ENCODE measurements at regions of chr6 and their contacts with region 1.

Region 1: DNA sequence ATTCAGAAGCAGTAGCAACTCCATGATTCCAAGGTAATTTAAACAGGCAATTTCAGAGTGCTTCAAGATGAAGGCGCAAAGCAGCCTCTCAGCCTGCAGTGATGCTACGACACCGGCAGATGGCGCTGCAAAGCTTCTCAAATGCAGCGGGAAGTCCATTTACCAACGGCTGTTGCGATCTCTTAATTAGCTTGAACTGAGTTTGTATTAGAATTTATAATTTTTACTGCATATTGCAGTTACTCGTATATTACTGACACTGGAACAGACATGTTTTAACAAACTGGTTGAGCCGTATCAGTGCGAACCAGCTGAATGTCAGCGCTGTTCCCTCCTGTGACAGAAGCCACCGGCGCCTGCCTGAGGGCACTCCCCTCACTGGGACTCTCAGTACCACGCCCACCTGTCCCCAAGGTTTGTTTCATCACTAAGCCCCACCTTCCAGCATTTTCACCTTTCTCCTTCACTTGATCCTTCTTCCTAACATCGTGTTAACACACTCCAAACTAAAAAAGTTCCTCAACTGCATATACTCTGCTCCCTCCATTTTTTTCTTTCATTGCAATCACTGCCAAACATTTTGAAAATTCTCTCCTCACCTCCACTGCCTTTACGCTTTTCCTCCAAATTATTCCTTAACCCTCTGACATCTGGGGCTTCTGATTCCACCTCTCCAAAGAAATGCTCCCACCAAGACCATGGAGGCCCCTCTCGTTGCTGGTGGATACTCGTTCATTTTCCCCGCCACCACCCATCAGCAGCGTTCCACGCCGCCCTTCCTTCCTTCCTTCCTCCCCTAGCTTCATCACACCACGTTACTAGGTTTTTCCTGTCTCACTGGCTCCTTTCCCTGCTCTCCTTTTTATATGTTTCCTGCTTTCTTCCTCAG is 14.5 kb downstream of the GNL1 start:
- DNase-seq: peak; percentile 88
- ATAC-seq: peak; percentile 82
- H3K4me3 Mint-ChIP-seq: peak overlapping the region; percentile 65
- H3K27ac Mint-ChIP-seq: peak overlapping the region; percentile 73
- H3K4me1 Mint-ChIP-seq: peaks cover 34% of the 10 kb centered on the region
- H3K27me3 Mint-ChIP-seq: peaks cover 5% of the 10 kb centered on the region

Region 2: GRCh38 chr6:30357678-30358540 is 183.8 kb before region 1 on chr6:
- CTCF ChIA-PET with region 1: no interaction called
- POLR2A ChIA-PET with region 1: no interaction called
- DNase-seq: peak; percentile 64
- ATAC-seq: peak; percentile 84
- H3K4me3 Mint-ChIP-seq: peak overlapping the region; percentile 71
- H3K27ac Mint-ChIP-seq: no peak overlapping the region
- H3K4me1 Mint-ChIP-seq: peaks cover 7% of the 10 kb centered on the region
- H3K27me3 Mint-ChIP-seq: peaks cover 63% of the 10 kb centered on the region

Region 3: GRCh38 chr6:30453508-30454116 is 88.1 kb before region 1 on chr6:
- CTCF ChIA-PET with region 1: interaction called, 76 read pairs
- POLR2A ChIA-PET with region 1: interaction called, 4 read pairs
- DNase-seq: peak; percentile 89
- ATAC-seq: peak; percentile 86
- H3K4me3 Mint-ChIP-seq: no peak overlapping the region
- H3K27ac Mint-ChIP-seq: no peak overlapping the region
- H3K4me1 Mint-ChIP-seq: peaks cover 29% of the 10 kb centered on the region
- H3K27me3 Mint-ChIP-seq: peaks cover 84% of the 10 kb centered on the region

Region 4: GRCh38 chr6:30489081-30490025 is 52.4 kb before region 1 on chr6 and contains the start of gene HLA-E:
- CTCF ChIA-PET with region 1: interaction called, 464 read pairs
- POLR2A ChIA-PET with region 1: interaction called, 35 read pairs
- DNase-seq: peak; percentile 96
- ATAC-seq: peak; percentile 79
- H3K4me3 Mint-ChIP-seq: peak within 1 kb of the TSS; percentile 99
- H3K27ac Mint-ChIP-seq: peak within 1 kb of the TSS; percentile 96
- H3K4me1 Mint-ChIP-seq: peaks cover 45% of the 10 kb centered on the region
- H3K27me3 Mint-ChIP-seq: peaks cover 5% of the 10 kb centered on the region
- total RNA-seq, gene HLA-E: 523 to 536 TPM

Region 5: DNA sequence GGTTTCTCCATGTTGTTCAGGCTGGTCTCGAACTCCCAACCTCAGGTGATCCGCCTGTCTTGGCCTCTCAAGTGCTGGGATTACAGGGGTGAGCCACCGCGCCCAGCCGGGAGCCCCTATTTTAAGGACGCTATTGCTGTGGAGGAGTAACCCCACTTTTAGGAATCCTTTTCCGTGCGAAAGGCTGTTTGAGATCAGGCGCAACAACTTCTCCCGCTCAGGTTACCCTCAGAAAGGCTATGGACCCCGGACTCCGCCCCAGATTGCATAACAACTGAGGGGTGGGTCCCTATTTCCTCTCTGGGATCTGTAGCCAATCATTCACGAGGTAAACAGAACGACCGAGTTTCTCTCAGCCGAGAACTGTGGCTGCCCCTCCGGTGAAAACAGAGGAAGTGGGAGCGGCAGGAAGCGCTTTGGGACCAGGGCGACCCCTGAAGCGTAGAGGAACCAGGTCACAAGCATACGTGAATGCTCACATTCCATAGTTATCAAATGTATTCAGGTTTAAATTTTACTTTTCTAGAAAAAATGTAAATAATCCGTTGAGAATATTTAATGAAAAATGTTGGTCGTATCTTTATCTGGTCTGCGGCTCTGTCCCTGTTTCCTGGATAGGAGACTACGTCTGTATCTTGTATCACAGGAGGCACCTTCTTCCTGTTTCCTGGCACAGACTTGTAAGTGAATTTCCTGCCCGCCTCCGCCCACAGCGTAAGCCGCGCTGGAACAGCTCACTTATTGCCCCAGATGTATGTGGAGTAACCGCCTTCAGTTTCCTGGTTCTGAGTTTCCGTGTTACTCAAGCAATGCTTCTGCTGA is 25.6 kb before region 1 on chr6:
- CTCF ChIA-PET with region 1: interaction called, 31 read pairs
- POLR2A ChIA-PET with region 1: interaction called, 3 read pairs
- DNase-seq: peak; percentile 95
- ATAC-seq: peak; percentile 92
- H3K4me3 Mint-ChIP-seq: peak overlapping the region; percentile 80
- H3K27ac Mint-ChIP-seq: peak overlapping the region; percentile 97
- H3K4me1 Mint-ChIP-seq: peaks cover 64% of the 10 kb centered on the region
- H3K27me3 Mint-ChIP-seq: no peaks in the 10 kb centered on the region

Region 6: GRCh38 chr6:30571075-30571768 is 29.5 kb after region 1 on chr6 and contains the start of gene ABCF1:
- CTCF ChIA-PET with region 1: interaction called, 44 read pairs
- POLR2A ChIA-PET with region 1: interaction called, 9 read pairs
- DNase-seq: peak; percentile 99
- ATAC-seq: peak; percentile 96
- H3K4me3 Mint-ChIP-seq: peak within 1 kb of the TSS; percentile 96
- H3K27ac Mint-ChIP-seq: peak within 1 kb of the TSS; percentile 98
- H3K4me1 Mint-ChIP-seq: peaks cover 54% of the 10 kb centered on the region
- H3K27me3 Mint-ChIP-seq: peaks cover 2% of the 10 kb centered on the region
- total RNA-seq, gene ABCF1: 72.2 to 79.6 TPM

Region 7: DNA sequence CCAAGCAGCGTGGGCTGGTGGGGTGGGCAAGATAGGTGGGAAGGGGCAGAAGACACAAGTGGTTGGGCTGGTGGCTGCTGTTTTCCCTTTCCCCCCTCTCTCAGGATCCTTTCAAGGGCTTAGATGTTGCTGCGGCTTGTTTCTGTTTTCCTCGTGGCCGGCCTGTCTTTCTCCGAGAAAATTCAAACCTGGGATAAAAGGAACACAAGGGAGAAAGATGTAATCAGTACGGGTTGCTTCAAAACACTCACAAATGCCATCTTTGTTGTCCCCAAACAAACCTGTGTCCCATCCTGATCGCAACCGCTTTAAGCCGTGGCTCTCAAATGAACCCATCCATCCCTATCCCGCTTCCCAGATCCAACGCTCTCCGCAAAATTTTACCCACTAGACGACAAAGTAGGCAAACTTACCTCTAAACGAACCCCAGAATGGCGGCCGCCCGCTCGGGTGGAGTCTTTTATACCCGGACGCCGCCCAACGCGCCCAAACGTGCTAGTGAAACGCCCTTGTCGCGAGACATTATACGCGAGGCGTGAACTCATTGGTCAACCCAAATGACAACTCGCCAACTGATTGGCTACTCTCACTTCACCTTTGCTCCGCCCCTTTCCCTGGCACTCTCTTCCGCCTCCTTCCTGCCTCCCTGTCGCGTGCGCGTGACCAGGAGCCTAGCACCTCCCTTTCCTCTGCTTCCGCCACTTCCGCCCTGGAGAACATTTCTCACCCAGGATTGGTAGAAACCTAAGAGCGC is 75.2 kb after region 1 on chr6 and contains the start of gene PPP1R10:
- CTCF ChIA-PET with region 1: interaction called, 26 read pairs
- POLR2A ChIA-PET with region 1: interaction called, 3 read pairs
- DNase-seq: peak; percentile 100
- ATAC-seq: peak; percentile 78
- H3K4me3 Mint-ChIP-seq: peak within 1 kb of the TSS; percentile 93
- H3K27ac Mint-ChIP-seq: peak within 1 kb of the TSS; percentile 98
- H3K4me1 Mint-ChIP-seq: peaks cover 38% of the 10 kb centered on the region
- H3K27me3 Mint-ChIP-seq: peaks cover 2% of the 10 kb centered on the region
- total RNA-seq, gene PPP1R10: 92.8 to 99.7 TPM

Region 8: GRCh38 chr6:30730601-30731435 is 189.1 kb after region 1 on chr6:
- CTCF ChIA-PET with region 1: interaction called, 14 read pairs
- POLR2A ChIA-PET with region 1: no interaction called
- DNase-seq: peak; percentile 92
- ATAC-seq: peak; percentile 95
- H3K4me3 Mint-ChIP-seq: peak overlapping the region; percentile 44
- H3K27ac Mint-ChIP-seq: peak overlapping the region; percentile 70
- H3K4me1 Mint-ChIP-seq: peaks cover 61% of the 10 kb centered on the region
- H3K27me3 Mint-ChIP-seq: no peaks in the 10 kb centered on the region

Region 9: DNA sequence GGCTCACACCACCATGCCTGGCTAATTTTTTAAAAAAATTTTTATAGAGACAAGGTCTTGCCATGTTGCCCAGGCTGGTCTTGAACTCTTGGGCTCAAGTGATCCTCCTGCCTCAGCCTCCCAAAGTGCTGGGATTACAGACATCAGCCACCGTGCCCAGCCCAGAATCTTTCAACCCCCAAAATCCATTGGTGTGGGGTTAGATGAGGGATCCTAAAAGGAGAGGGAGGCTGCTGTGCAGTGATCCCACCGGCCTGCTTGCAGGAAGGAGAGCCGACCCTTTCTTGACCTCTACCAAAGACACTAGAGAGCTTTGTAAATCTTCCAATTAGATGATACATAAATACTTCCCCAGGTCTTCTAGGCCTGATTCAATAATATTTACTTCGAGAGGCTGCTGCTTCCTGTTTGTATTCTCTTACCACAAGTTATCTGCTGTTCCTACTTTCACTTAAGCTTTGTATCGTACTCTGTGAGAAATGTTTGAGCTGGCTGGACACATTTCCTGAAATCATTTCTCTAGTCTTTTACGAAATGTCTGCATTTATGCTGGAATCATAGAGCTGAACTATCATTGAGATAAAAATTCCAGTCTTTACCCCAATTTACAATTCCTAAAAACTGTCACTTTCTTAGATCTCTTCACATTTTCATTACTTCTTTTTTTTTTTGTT is 251.9 kb after region 1 on chr6:
- CTCF ChIA-PET with region 1: no interaction called
- POLR2A ChIA-PET with region 1: no interaction called
- DNase-seq: peak; percentile 42
- ATAC-seq: peak; percentile 80
- H3K4me3 Mint-ChIP-seq: peak overlapping the region; percentile 67
- H3K27ac Mint-ChIP-seq: peak overlapping the region; percentile 93
- H3K4me1 Mint-ChIP-seq: peaks cover 66% of the 10 kb centered on the region
- H3K27me3 Mint-ChIP-seq: no peaks in the 10 kb centered on the region

Region 10: GRCh38 chr6:30883685-30884520 is 342.1 kb after region 1 on chr6 and contains the start of gene DDR1:
- CTCF ChIA-PET with region 1: no interaction called
- POLR2A ChIA-PET with region 1: no interaction called
- DNase-seq: peak; percentile 57
- ATAC-seq: peak; percentile 85
- H3K4me3 Mint-ChIP-seq: peak within 1 kb of the TSS; percentile 73
- H3K27ac Mint-ChIP-seq: peak within 1 kb of the TSS; percentile 21
- H3K4me1 Mint-ChIP-seq: peaks cover 31% of the 10 kb centered on the region
- H3K27me3 Mint-ChIP-seq: peaks cover 10% of the 10 kb centered on the region
- total RNA-seq, gene DDR1: 6.3 to 7.4 TPM

Measured in activated CD8-positive, alpha-beta T cell treated with anti-CD3 and anti-CD28 coated beads, Interleukin-2, amount 10 ng/mL, durations not matched to agents 7 days and 5 days (primary cell).